ENCODE measurements at regions of chr2 and their contacts with region 1.

Region 1: GRCh38 chr2:210997373-210997772 is 441.0 kb downstream of the CPS1 start:
- DNase-seq: no peak
- H3K4me3 ChIP-seq: no peak overlapping the region
- H3K27ac ChIP-seq: no peak overlapping the region
- H3K4me1 ChIP-seq: no peaks in the 10 kb centered on the region
- H3K27me3 ChIP-seq: no peaks in the 10 kb centered on the region
- CTCF ChIP-seq: no peak

Region 2: GRCh38 chr2:211014376-211014775 is 17.0 kb after region 1 on chr2:
- CTCF ChIA-PET with region 1: no interaction called
- POLR2A ChIA-PET with region 1: no interaction called
- intact Hi-C with region 1: loop called (anchors 1 kb)
- DNase-seq: no peak
- H3K4me3 ChIP-seq: no peak overlapping the region
- H3K27ac ChIP-seq: no peak overlapping the region
- H3K4me1 ChIP-seq: no peaks in the 10 kb centered on the region
- H3K27me3 ChIP-seq: no peaks in the 10 kb centered on the region
- CTCF ChIP-seq: no peak

Region 3: DNA sequence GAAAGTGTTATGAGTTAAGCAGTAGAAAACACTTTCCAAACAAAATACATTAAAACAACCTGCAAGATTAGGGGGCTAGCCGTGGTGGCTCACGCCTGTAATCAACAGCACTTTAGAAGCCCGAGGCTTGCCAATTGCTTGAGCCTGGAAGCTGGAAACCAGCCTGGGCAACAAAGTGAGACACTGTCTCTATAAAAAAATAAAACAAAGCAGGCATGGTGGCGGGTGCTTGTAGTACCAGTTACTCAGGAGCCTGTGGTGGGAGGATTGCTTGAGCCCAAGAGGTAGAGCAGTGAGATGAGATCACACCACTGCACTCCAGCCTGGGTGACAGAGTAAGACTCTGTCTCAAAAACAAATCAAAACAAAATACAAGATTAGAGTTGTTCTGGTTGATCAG is 1332.9 kb after region 1 on chr2:
- CTCF ChIA-PET with region 1: no interaction called
- POLR2A ChIA-PET with region 1: no interaction called
- intact Hi-C with region 1: no loop called
- DNase-seq: peak; percentile 38
- H3K4me3 ChIP-seq: no peak overlapping the region
- H3K27ac ChIP-seq: peak overlapping the region; percentile 65
- H3K4me1 ChIP-seq: peaks cover 44% of the 10 kb centered on the region
- H3K27me3 ChIP-seq: no peaks in the 10 kb centered on the region
- CTCF ChIP-seq: no peak